Left lung (tissue), 14 donors: ENCODE measurements at regions of chr12 and their contacts with region 1.

Region 1: DNA sequence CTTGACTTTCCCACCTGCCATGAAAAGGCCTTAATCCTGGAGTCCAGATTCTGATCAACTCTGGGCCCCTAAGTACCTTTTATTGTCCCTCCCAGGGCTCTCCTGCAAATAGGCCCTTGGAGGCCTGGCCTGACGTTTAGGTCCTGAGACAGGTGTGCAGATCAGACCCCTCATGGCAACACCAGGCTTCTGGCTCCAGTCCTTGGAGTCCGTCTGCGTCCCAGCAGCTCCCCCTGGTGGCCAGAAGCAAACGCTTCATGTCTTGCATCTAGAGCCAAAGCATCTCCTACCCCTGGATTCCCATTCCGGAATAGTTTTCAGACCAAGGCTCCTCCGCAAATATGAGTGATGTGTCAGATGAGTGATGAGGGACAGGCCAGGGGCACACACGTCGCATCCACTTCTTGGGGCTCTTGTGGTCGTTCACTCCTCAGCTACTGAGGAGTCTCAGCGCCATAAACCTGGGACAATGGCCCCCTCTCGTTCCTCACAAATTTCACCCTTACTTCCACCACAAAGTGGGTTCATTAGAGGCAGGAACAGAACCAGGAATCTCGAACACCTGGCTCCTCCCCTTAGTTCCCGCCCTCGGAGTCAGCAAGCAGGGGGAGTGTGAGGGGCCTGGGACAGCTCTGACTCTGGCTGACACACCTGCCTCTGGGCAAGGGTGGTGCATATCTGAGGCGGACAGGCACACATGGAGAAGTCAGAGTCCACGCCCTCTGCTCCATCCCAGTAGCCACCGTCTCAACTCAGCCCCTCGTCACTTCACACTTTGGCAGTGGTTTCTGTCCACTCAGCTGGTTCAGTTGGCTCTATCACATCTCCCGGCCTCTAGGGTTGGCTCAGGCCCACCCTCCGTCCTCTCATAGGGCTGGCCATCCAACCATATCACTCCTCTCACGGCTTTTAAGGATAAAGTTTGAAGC is 77.9 kb upstream of the PWP1 start:
- DNase-seq: peak; percentile 72 to 93 (median 84)
- ATAC-seq: peak; percentile 95
- H3K4me3 ChIP-seq: no peak overlapping the region
- H3K27ac ChIP-seq: no peak overlapping the region
- H3K4me1 ChIP-seq: no peaks in the 10 kb centered on the region
- H3K27me3 ChIP-seq: no peaks in the 10 kb centered on the region
- CTCF ChIP-seq: peak; percentile 88 to 92

Region 2: DNA sequence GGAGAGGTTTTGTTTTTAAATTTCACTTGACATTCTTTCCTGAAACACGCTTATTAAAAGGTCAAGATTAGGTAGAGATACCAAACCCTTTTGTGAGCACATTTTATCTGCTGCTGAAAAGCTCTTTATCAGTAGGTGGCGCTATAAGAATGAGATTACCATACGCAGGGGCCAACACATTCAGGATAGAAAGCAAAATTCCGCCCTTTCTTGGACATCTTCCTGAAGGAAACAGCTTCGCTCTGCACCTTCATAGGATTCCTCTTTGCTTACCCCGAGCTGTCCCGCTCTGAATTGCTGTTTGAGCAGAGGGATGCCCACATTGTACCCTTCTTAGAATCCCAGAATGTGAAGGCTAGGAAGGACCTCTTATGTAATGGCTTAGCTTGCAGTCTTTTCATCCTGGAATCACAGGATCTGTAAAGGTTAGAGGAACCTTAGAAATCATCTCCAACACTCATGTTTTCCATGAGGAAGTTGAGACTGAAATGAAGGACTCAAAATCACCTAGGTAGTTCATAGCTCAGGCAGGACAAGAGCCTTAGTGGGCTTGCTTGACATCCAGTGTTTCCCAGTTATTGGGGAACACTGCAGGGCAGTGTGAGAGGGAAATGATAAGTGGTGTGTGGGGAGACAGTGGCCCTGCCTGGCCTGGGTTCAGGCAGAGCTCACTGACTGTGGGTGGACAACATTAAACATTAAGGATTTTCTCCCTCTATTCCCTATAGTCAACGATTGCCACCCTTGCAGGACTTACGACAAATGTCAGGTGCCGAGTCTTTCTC is 475.7 kb before region 1 on chr12:
- intact Hi-C with region 1: loop called in 1 of 2 experiments (anchors 5 kb)
- DNase-seq: peak in 2 of 4 donors; percentile 54 to 69
- ATAC-seq: peak; percentile 84
- H3K4me3 ChIP-seq: no peak overlapping the region
- H3K27ac ChIP-seq: no peak overlapping the region
- H3K4me1 ChIP-seq: no peaks in the 10 kb centered on the region
- H3K27me3 ChIP-seq: no peaks in the 10 kb centered on the region
- CTCF ChIP-seq: peak; percentile 58 to 72

Region 3: GRCh38 chr12:107801150-107801549 is 193.4 kb after region 1 on chr12:
- intact Hi-C with region 1: no loop called
- DNase-seq: no peak
- ATAC-seq: no peak
- H3K4me3 ChIP-seq: no peak overlapping the region
- H3K27ac ChIP-seq: no peak overlapping the region
- H3K4me1 ChIP-seq: no peaks in the 10 kb centered on the region
- H3K27me3 ChIP-seq: no peaks in the 10 kb centered on the region
- CTCF ChIP-seq: no peak